Activated CD4-positive, alpha-beta T cell treated with anti-CD3 and anti-CD28 coated beads, Interleukin-2, amount 10 ng/mL, durations not matched to agents 24 days and 14 days (primary cell): ENCODE measurements at regions of chr7 and their contacts with region 1.

Region 1: DNA sequence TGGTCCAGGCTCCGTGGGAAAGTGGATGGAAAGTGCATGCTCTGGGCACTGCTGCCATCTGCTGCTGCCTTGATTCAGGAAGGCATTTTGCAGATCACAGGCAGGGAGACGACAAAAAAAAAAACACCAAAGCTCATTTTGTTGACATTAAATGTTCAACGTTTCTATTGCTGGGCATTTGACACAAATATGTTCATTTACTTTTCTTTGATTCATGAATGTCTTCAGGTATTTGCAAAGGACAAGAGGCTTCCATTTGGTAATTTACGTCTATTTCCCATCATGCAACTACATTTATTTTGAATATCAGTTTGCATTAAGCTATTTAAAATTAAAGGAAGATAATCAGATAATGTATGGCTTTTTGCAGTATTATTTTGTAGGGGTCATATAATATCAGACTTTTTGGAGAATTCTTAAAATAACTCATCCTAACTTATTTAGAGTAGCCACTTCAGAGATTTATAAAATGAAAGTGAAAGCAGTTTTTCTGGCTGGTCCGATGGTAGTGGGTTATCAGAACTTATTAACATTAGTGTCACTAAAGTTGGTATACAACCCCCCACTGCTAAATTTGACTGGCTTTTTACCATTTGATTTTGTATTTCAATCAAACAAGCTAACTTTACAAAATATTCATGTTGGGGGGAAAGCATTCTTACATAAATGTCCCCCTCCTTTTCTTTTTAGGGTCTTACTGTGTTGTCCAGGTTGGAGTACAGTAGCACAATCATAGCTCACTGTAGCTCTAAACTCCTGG is 65.3 kb downstream of the PDIA4 start:
- DNase-seq: peak; percentile 89
- H3K4me3 Mint-ChIP-seq: peak overlapping the region; percentile 96
- H3K27ac Mint-ChIP-seq: peak overlapping the region; percentile 89
- H3K4me1 Mint-ChIP-seq: peaks cover 24% of the 10 kb centered on the region
- H3K27me3 Mint-ChIP-seq: no peaks in the 10 kb centered on the region

Region 2: GRCh38 chr7:148262721-148263229 is 700.2 kb before region 1 on chr7:
- intact Hi-C with region 1: loop called (anchors 2 kb)
- DNase-seq: peak; percentile 87
- H3K4me3 Mint-ChIP-seq: peak overlapping the region; percentile 22
- H3K27ac Mint-ChIP-seq: no peak overlapping the region
- H3K4me1 Mint-ChIP-seq: peaks cover 7% of the 10 kb centered on the region
- H3K27me3 Mint-ChIP-seq: peaks cover 5% of the 10 kb centered on the region

Region 3: GRCh38 chr7:148575640-148576411 is 387.2 kb before region 1 on chr7:
- intact Hi-C with region 1: loop called (anchors 1 kb)
- DNase-seq: peak; percentile 92
- H3K4me3 Mint-ChIP-seq: no peak overlapping the region
- H3K27ac Mint-ChIP-seq: peak overlapping the region; percentile 29
- H3K4me1 Mint-ChIP-seq: peaks cover 15% of the 10 kb centered on the region
- H3K27me3 Mint-ChIP-seq: peaks cover 12% of the 10 kb centered on the region

Region 4: DNA sequence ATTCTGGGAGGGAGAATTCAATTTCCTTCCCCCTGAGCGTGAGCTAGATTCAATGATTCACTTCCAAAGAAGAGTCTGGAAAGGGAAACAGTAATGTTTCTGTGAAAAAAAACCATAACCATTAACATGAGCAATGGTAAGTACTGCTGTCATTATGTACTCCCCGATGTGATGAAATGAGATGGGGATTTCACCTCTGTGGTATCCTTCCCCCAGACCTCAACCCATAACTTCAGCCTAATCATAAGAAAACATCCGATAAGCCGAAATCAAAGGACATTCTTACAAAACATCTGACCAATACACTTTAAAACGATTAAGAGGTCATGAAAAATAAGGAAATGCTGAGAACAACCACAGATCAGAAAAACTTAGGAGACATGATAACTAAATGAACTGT is 106.1 kb before region 1 on chr7:
- intact Hi-C with region 1: loop called (anchors 1 kb)
- DNase-seq: no peak
- H3K4me3 Mint-ChIP-seq: peak overlapping the region; percentile 32
- H3K27ac Mint-ChIP-seq: peak overlapping the region; percentile 79
- H3K4me1 Mint-ChIP-seq: peaks cover 40% of the 10 kb centered on the region
- H3K27me3 Mint-ChIP-seq: no peaks in the 10 kb centered on the region

Region 5: GRCh38 chr7:148940702-148941597 is 22.1 kb before region 1 on chr7:
- intact Hi-C with region 1: loop called (anchors 1 kb)
- DNase-seq: peak; percentile 92
- H3K4me3 Mint-ChIP-seq: peak overlapping the region; percentile 97
- H3K27ac Mint-ChIP-seq: peak overlapping the region; percentile 99
- H3K4me1 Mint-ChIP-seq: peaks cover 17% of the 10 kb centered on the region
- H3K27me3 Mint-ChIP-seq: no peaks in the 10 kb centered on the region

Region 6: DNA sequence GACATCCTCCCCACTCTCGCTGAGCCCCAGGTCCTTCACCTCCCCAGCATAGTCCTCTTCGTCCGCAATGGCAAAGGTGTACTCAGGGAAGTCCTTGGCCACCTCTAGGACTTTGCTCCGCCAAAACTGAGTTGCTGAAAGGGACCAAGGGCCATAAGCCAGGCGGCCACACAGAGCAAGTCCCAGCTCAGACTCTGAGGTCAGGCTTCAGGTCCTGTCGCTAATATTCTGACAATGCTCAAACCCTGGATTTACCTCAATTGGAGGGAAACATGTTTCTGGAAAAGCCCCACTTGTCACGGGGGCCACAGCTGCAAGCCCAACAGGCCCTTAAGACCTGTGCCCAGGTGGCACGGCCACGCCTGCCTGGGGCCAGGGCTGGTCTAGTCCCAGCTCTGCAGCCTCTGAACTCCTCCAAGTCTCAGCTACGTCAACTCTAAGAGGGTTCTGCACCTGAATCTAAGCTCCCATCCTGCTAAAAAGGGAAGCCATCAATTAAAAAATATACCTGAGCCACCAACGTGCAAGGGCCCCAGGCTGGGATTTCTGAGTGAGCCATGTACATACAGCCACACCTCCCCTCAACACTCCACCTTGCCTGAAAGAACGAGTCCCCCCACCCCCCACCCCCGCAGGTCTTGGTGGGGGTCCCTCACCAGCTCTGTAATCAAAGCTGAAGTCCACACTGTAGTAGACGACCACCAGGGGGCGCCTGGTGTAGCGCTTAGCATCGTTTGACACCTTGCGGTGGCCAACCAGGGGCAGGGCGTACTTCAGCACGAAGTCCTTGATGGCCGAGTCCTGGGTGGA is 42.4 kb after region 1 on chr7:
- intact Hi-C with region 1: no loop called
- DNase-seq: peak; percentile 93
- H3K4me3 Mint-ChIP-seq: no peak overlapping the region
- H3K27ac Mint-ChIP-seq: no peak overlapping the region
- H3K4me1 Mint-ChIP-seq: peaks cover 2% of the 10 kb centered on the region
- H3K27me3 Mint-ChIP-seq: no peaks in the 10 kb centered on the region